AG04450 (cell line): ENCODE measurements at regions of chr15 and their contacts with region 1.

Region 1: GRCh38 chr15:51649659-51650521 is 27.3 kb upstream of the DMXL2 start:
- DNase-seq: peak; percentile 50
- H3K4me3 ChIP-seq: no peak overlapping the region
- H3K27ac ChIP-seq: no peak overlapping the region
- H3K27me3 ChIP-seq: peaks cover 4% of the 10 kb centered on the region
- CTCF ChIP-seq: peak; percentile 83

Region 2: GRCh38 chr15:51622604-51623370 is 27.1 kb before region 1 on chr15 and contains the start of gene DMXL2:
- CTCF ChIA-PET with region 1: interaction called, 10 read pairs
- POLR2A ChIA-PET with region 1: no interaction called
- DNase-seq: peak; percentile 71
- H3K4me3 ChIP-seq: peak within 1 kb of the TSS; percentile 79
- H3K27ac ChIP-seq: peak within 1 kb of the TSS; percentile 73
- H3K27me3 ChIP-seq: peaks cover 6% of the 10 kb centered on the region
- CTCF ChIP-seq: no peak
- polyA plus RNA-seq, gene DMXL2: 18.2 and 18.6 TPM in 2 replicates

Region 3: GRCh38 chr15:51709031-51709430 is 59.1 kb after region 1 on chr15:
- CTCF ChIA-PET with region 1: interaction called, 16 read pairs
- POLR2A ChIA-PET with region 1: no interaction called
- DNase-seq: no peak
- H3K4me3 ChIP-seq: no peak overlapping the region
- H3K27ac ChIP-seq: no peak overlapping the region
- H3K27me3 ChIP-seq: no peaks in the 10 kb centered on the region
- CTCF ChIP-seq: no peak

Region 4: GRCh38 chr15:51737280-51738017 is 87.6 kb after region 1 on chr15 and contains the start of gene LYSMD2:
- CTCF ChIA-PET with region 1: interaction called, 10 read pairs
- POLR2A ChIA-PET with region 1: no interaction called
- DNase-seq: no peak
- H3K4me3 ChIP-seq: peak within 1 kb of the TSS; percentile 69
- H3K27ac ChIP-seq: no peak within 1 kb of the TSS
- H3K27me3 ChIP-seq: no peaks in the 10 kb centered on the region
- CTCF ChIP-seq: no peak
- polyA plus RNA-seq, gene LYSMD2: 6.5 and 10.2 TPM in 2 replicates

Region 5: DNA sequence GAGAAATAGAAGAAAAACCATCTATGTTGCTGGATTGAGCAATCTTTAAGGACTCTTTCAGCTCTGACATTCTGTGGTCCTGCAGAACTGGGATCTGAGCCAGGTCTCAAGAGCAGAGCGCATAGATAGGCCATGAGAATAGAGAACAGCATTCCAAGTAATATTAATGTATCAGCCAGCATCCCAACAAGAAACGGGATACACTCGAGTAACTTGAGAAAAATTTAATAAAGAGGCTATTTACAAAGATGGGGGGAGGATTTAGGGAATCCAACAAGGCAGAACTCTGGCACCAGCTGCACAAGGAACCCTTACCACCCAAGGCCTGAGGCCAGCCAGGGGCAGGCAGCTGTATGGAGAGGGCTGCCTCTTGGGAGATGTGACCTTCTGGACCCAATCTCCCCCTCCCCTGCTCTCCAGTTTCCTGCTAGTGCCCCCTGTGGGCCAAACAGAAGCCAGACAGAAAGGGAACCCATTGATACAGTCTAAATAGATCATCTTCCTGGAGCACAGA is 109.7 kb after region 1 on chr15:
- CTCF ChIA-PET with region 1: interaction called, 22 read pairs
- POLR2A ChIA-PET with region 1: no interaction called
- DNase-seq: peak; percentile 81
- H3K4me3 ChIP-seq: no peak overlapping the region
- H3K27ac ChIP-seq: peak overlapping the region; percentile 34
- H3K27me3 ChIP-seq: peaks cover 4% of the 10 kb centered on the region
- CTCF ChIP-seq: peak; percentile 40

Region 6: DNA sequence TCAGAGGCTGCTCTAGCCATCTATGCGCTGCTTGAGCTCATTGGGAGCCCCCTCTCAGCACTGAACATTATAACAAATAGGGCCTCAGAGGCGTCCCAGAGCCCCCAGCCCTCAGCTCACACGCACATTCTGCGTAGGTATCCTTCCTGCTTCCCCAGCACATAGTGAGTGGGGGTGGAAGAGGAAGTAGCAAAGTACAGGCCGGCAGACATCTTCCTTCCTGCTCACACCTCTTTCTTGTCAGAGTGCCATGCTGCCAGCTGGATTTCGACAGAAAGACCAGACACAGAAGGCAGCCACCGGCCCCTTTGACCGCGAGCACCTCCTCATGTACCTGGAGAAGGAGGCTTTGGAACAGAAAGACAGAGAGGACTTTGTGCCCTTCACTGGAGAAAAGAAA is 118.1 kb after region 1 on chr15:
- CTCF ChIA-PET with region 1: interaction called, 490 read pairs
- POLR2A ChIA-PET with region 1: no interaction called
- DNase-seq: no peak
- H3K4me3 ChIP-seq: no peak overlapping the region
- H3K27ac ChIP-seq: no peak overlapping the region
- H3K27me3 ChIP-seq: peaks cover 5% of the 10 kb centered on the region
- CTCF ChIP-seq: no peak

Region 7: GRCh38 chr15:51782357-51782896 is 132.5 kb after region 1 on chr15:
- CTCF ChIA-PET with region 1: interaction called, 490 read pairs
- POLR2A ChIA-PET with region 1: no interaction called
- DNase-seq: no peak
- H3K4me3 ChIP-seq: no peak overlapping the region
- H3K27ac ChIP-seq: no peak overlapping the region
- H3K27me3 ChIP-seq: no peaks in the 10 kb centered on the region
- CTCF ChIP-seq: peak; percentile 31; the same call in 1 of the 2 replicates